ENCODE measurements at regions of chr11 and their contacts with region 1.

Region 1: DNA sequence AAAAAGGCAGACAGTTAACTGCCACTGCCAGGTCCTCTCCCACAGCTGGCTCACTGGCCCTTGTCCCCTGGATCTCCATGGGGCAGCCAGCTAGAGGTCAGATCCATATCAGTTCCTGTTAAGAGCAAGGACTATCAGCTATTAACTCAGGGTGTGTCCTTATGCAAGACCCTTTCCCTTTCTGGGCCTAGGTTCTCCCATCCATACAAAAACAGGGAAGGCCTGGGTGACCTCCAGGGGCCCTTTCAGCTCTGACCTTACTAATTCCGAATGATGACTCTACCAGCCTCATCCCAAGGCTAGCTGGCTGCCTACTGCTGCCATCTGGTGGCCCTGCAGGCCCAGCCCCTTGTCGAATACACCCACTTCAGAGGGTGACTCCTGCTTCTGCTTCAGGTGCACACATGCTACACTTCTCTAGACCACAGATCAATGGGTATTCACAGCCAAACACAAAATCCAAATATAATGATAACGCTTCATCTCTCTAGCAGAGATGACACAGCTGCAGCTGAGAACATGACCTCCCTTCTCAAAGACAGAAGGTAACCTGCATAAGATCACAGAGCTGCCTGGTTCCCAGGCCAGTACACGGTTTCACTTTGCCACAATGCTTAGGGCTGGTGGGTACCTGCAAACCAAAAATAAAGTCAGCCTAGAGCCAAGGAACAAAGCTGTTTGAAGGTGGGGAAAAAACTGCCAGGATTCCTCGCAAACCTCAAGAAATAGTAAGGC is 34.1 kb downstream of the SERGEF start:
- DNase-seq: no peak
- H3K4me3 ChIP-seq: no peak overlapping the region
- H3K27ac ChIP-seq: no peak overlapping the region
- H3K27me3 ChIP-seq: no peaks in the 10 kb centered on the region
- CTCF ChIP-seq: peak; percentile 92

Region 2: GRCh38 chr11:17760102-17761029 is 218.4 kb before region 1 on chr11:
- CTCF ChIA-PET with region 1: interaction called, 63 read pairs
- POLR2A ChIA-PET with region 1: no interaction called
- DNase-seq: no peak
- H3K4me3 ChIP-seq: no peak overlapping the region
- H3K27ac ChIP-seq: no peak overlapping the region
- H3K27me3 ChIP-seq: peaks cover 13% of the 10 kb centered on the region
- CTCF ChIP-seq: peak; percentile 73

Region 3: DNA sequence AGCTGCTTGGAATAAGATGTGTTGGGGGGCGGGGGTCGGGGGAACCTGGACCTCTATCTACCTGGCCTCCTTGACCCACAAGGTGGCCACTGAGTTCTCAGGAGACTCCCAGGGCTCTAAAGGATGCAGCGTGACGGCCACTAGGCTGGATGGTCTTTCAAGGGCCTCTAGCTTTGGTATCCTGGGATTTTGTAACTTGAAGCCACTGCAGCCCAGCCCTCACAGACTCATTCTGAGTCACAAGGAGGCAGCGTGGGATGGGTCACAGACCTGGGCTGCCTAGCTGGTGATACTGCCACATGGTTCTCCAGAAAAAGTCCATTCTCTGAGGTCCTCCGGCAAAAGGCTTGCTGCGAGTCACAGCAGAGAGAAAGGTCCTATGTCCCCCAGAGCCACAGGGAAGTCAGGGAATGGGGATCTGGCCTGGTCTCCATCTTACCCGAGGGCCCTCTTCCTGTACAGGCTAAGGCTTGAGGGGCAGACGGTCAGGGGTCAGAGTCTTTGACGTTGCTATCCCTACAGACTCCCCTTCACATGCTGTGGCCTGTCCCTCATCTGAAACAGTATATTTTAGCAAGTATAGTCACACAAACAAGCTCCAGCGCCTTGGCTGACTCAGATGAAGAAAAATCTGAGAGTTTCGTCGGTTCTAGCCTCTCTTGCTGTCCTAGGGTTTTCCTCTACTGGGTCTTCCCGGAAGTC is 191.7 kb before region 1 on chr11:
- CTCF ChIA-PET with region 1: interaction called, 12 read pairs
- POLR2A ChIA-PET with region 1: no interaction called
- DNase-seq: peak; percentile 77
- H3K4me3 ChIP-seq: no peak overlapping the region
- H3K27ac ChIP-seq: peak overlapping the region; percentile 98
- H3K27me3 ChIP-seq: no peaks in the 10 kb centered on the region
- CTCF ChIP-seq: peak; percentile 4; the same call in 1 of the 2 replicates

Region 4: DNA sequence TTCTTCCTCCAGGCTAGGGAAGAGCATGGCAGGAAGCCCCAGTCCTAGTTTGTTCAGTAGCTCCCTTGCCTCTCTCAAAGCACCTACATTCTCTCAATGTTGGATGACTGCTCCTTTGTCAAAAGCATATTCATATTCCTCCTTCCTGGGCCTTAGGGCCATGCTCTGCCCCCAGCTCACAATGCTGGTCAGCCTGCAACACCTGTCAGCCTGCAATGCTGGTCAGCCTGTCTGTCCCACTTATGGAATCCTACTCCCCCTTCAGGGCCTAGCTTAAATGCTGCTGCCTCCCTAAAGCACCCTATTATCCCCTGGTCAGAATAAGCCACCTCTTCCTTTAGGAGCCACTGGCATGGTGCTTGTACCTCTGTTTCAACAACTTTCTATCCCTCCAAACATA is 11.1 kb before region 1 on chr11:
- CTCF ChIA-PET with region 1: interaction called, 59 read pairs
- POLR2A ChIA-PET with region 1: interaction called, 3 read pairs
- DNase-seq: no peak
- H3K4me3 ChIP-seq: no peak overlapping the region
- H3K27ac ChIP-seq: no peak overlapping the region
- H3K27me3 ChIP-seq: no peaks in the 10 kb centered on the region
- CTCF ChIP-seq: no peak